T-cell (primary cell): ENCODE measurements at regions of chr4 and their contacts with region 1.

Region 1: GRCh38 chr4:158710814-158711213 is 12.4 kb downstream of the PPID start:
- DNase-seq: peak in 1 of 35 experiments; percentile 19
- ATAC-seq: no peak
- H3K4me3 ChIP-seq: no peak overlapping the region
- H3K4me3 Mint-ChIP-seq: no peak overlapping the region
- H3K27ac ChIP-seq: no peak overlapping the region
- H3K27ac Mint-ChIP-seq: no peak overlapping the region
- H3K4me1 ChIP-seq: no peaks in the 10 kb centered on the region
- H3K4me1 Mint-ChIP-seq: peaks cover 0 to 2% (median 0%) of the 10 kb centered on the region in 3 donors
- H3K27me3 ChIP-seq: no peaks in the 10 kb centered on the region
- H3K27me3 Mint-ChIP-seq: no peaks in the 10 kb centered on the region

Region 2: GRCh38 chr4:158652920-158653319 is 57.9 kb before region 1 on chr4:
- CTCF ChIA-PET with region 1: no interaction called
- POLR2A ChIA-PET with region 1: no interaction called
- DNase-seq: no peak
- ATAC-seq: no peak
- H3K4me3 ChIP-seq: peak overlapping the region in 1 of 2 donors; percentile 1
- H3K4me3 Mint-ChIP-seq: peak overlapping the region; percentile 47 to 57 (median 54)
- H3K27ac ChIP-seq: no peak overlapping the region
- H3K27ac Mint-ChIP-seq: peak overlapping the region in 1 of 2 donors; percentile 71
- H3K4me1 ChIP-seq: no peaks in the 10 kb centered on the region
- H3K4me1 Mint-ChIP-seq: peaks cover 7 to 9% (median 8%) of the 10 kb centered on the region in 3 donors
- H3K27me3 ChIP-seq: peaks cover 0 to 2% of the 10 kb centered on the region in 2 experiments
- H3K27me3 Mint-ChIP-seq: peaks cover 0 to 1% of the 10 kb centered on the region in 2 donors

Region 3: DNA sequence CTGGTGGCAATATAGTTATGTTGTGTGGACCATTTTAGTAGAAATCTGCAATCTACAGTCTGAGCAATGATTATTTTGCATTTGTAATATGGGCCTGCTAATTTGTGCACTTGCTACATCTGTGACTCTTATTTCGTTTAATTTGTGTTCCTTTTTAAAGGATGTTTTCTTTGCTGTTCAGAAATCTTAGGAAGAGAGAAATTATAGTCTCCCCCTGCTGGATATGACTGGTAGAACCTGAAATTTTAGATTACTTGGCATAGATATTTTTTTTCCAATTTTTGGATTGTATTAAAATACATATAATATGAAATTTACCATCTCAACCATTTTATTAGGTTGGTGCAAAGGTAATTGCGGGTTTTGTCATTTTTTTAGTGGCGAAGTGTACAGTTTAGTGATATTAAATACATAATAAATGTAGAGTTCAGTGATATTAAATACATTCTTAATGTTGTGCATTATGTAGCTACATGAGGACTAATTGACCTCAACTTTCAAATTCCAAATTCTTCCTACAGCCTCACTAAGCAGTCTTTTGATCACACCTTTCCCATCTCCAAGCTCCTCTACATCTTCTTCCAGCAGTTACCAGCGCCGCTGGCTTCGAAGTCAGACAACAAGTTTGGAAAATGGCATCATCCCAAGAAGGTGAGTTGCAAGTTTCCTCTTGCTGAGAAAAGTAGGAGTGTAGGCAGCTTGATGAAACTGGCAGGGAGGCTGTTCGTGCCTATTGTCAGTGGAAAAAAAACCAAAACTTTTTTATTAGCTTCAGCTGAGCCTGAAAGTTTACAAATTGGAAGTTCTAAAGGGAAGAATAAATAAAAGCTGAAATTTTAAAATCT is 140.2 kb after region 1 on chr4:
- CTCF ChIA-PET with region 1: interaction called in 1 of 2 experiments, 17 read pairs
- POLR2A ChIA-PET with region 1: no interaction called
- DNase-seq: peak in 1 of 35 experiments; percentile 58
- ATAC-seq: peak in 2 of 4 experiments; percentile 30 to 32
- H3K4me3 ChIP-seq: no peak overlapping the region
- H3K4me3 Mint-ChIP-seq: no peak overlapping the region
- H3K27ac ChIP-seq: no peak overlapping the region
- H3K27ac Mint-ChIP-seq: peak overlapping the region in 1 of 2 donors; percentile 70
- H3K4me1 ChIP-seq: peaks cover 0 to 5% of the 10 kb centered on the region in 2 experiments
- H3K4me1 Mint-ChIP-seq: peaks cover 6 to 8% (median 7%) of the 10 kb centered on the region in 3 donors
- H3K27me3 ChIP-seq: no peaks in the 10 kb centered on the region
- H3K27me3 Mint-ChIP-seq: no peaks in the 10 kb centered on the region

Region 4: DNA sequence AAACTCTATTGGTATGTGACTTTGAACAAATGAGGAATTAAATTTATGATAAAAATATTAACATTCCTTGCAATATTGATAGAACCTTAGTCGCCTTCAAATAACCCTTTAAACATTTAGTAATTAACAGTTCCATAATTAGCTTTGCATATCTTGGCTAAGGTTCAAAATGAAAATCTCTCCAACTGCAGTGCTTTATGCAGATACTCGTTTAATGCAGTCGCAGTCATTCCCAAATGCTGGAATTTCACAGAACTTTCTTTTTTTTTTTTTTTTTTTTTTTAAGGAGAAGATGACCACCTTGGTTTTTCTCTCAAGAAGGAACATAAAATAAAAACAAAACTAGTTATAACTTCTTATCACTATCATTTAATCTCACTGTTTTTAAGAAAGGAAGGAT is 397.3 kb after region 1 on chr4:
- CTCF ChIA-PET with region 1: no interaction called
- POLR2A ChIA-PET with region 1: interaction called in 1 of 2 experiments, 18 read pairs
- DNase-seq: no peak
- ATAC-seq: no peak
- H3K4me3 ChIP-seq: no peak overlapping the region
- H3K4me3 Mint-ChIP-seq: no peak overlapping the region
- H3K27ac ChIP-seq: no peak overlapping the region
- H3K27ac Mint-ChIP-seq: no peak overlapping the region
- H3K4me1 ChIP-seq: peaks cover 8 to 13% of the 10 kb centered on the region in 2 experiments
- H3K4me1 Mint-ChIP-seq: peaks cover 32 to 47% (median 43%) of the 10 kb centered on the region in 3 donors
- H3K27me3 ChIP-seq: no peaks in the 10 kb centered on the region
- H3K27me3 Mint-ChIP-seq: no peaks in the 10 kb centered on the region